ENCODE measurements at regions of chr2 and their contacts with region 1.

Region 1: GRCh38 chr2:231674587-231675338 is 33.6 kb upstream of the PTMA start:
- DNase-seq: no peak
- H3K4me3 ChIP-seq: no peak overlapping the region
- H3K27ac ChIP-seq: no peak overlapping the region
- H3K27me3 ChIP-seq: no peaks in the 10 kb centered on the region
- CTCF ChIP-seq: peak; percentile 88

Region 2: GRCh38 chr2:231212329-231212845 is 462.4 kb before region 1 on chr2:
- CTCF ChIA-PET with region 1: no interaction called
- POLR2A ChIA-PET with region 1: no interaction called
- DNase-seq: no peak
- H3K4me3 ChIP-seq: no peak overlapping the region
- H3K27ac ChIP-seq: peak overlapping the region; percentile 43
- H3K27me3 ChIP-seq: no peaks in the 10 kb centered on the region
- CTCF ChIP-seq: no peak

Region 3: GRCh38 chr2:231612179-231613053 is 62.3 kb before region 1 on chr2:
- CTCF ChIA-PET with region 1: interaction called, 256 read pairs
- POLR2A ChIA-PET with region 1: interaction called, 6 read pairs
- DNase-seq: peak; percentile 84
- H3K4me3 ChIP-seq: no peak overlapping the region
- H3K27ac ChIP-seq: peak overlapping the region; percentile 96
- H3K27me3 ChIP-seq: no peaks in the 10 kb centered on the region
- CTCF ChIP-seq: peak; percentile 93

Region 4: DNA sequence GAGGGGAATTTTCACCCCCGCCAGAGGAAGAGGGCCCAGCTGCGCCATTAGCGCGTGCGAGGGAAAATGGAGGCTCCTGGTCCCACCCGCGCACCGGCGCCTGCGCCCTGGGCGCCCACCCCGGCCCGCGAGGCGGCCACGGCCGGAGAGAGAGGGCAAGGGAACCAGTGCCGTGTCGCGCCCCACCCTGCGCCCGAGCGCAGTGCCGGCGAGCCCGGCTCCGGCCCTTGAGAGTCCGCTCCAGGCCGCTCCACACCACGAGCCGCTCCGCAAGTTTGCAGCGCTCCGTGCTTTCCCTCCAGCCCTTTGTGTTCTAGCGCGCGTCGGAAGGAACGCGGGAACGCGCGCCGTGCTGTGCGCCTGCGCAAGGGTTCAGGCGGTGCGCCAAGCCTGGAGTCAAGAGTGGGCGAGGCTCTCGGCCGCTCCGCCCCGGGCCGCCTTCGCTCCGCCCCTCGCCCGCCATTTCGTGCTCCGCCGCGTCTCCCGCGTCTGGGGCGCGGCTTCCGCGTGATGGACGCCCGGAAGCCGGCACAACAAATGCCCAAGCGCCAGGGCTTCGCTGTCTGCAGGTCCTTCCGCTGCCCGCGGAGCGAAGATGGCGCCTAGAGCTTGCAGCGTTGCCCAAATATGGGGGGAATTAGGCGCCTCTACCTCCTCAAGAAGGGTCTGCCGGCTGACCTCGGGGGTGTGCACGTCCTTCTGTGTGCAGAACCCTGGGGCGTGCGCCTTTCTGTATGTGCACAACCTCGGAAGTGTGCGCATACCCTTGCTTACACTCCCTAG is 12.5 kb before region 1 on chr2:
- CTCF ChIA-PET with region 1: interaction called, 74 read pairs
- POLR2A ChIA-PET with region 1: interaction called, 6 read pairs
- DNase-seq: peak; percentile 95
- H3K4me3 ChIP-seq: peak overlapping the region; percentile 46
- H3K27ac ChIP-seq: peak overlapping the region; percentile 61
- H3K27me3 ChIP-seq: no peaks in the 10 kb centered on the region
- CTCF ChIP-seq: no peak

Region 5: DNA sequence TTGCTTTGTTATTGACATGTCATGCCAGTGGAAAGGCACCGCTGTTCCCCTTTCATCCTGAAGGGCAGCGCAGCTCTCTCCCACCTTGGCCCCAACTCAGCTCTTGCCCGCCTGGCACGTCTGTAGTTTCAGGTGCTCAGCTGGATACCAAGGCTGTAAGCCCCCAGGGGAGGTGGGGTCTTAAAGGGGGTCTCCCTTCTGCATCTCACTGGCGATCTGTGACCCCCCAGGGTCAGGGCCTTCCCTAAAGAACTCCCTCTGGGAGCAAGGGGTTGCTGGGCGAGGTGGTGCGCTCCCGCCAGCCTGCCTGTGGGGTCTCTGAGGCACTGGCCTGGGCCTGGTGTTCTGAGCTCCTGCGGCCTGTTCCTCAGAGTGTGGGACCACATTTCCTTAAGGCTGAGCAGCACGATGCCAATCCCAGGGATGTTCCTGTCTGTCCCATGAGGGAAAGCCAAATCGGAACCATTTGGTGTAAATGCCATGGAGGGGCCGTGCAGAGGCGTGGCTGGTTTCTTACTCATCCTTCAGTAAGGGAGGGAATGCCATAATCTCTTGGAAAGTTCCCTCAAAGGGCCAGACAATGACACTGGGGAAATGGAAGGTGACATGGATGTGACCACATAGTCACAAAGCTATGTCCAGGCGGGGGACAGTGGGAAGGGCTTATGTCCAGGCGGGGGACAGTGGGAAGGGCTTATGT is 19.0 kb after region 1 on chr2:
- CTCF ChIA-PET with region 1: interaction called, 15 read pairs
- POLR2A ChIA-PET with region 1: no interaction called
- DNase-seq: no peak
- H3K4me3 ChIP-seq: no peak overlapping the region
- H3K27ac ChIP-seq: peak overlapping the region; percentile 11
- H3K27me3 ChIP-seq: no peaks in the 10 kb centered on the region
- CTCF ChIP-seq: no peak

Region 6: GRCh38 chr2:231706731-231707624 is 32.2 kb after region 1 on chr2:
- CTCF ChIA-PET with region 1: interaction called, 227 read pairs
- POLR2A ChIA-PET with region 1: interaction called, 51 read pairs
- DNase-seq: peak; percentile 97
- H3K4me3 ChIP-seq: peak overlapping the region; percentile 77
- H3K27ac ChIP-seq: peak overlapping the region; percentile 98
- H3K27me3 ChIP-seq: no peaks in the 10 kb centered on the region
- CTCF ChIP-seq: peak; percentile 91

Region 7: GRCh38 chr2:231726228-231726627 is 51.5 kb after region 1 on chr2:
- CTCF ChIA-PET with region 1: interaction called, 10 read pairs
- POLR2A ChIA-PET with region 1: interaction called, 8 read pairs
- DNase-seq: no peak
- H3K4me3 ChIP-seq: no peak overlapping the region
- H3K27ac ChIP-seq: no peak overlapping the region
- H3K27me3 ChIP-seq: no peaks in the 10 kb centered on the region
- CTCF ChIP-seq: no peak

Region 8: DNA sequence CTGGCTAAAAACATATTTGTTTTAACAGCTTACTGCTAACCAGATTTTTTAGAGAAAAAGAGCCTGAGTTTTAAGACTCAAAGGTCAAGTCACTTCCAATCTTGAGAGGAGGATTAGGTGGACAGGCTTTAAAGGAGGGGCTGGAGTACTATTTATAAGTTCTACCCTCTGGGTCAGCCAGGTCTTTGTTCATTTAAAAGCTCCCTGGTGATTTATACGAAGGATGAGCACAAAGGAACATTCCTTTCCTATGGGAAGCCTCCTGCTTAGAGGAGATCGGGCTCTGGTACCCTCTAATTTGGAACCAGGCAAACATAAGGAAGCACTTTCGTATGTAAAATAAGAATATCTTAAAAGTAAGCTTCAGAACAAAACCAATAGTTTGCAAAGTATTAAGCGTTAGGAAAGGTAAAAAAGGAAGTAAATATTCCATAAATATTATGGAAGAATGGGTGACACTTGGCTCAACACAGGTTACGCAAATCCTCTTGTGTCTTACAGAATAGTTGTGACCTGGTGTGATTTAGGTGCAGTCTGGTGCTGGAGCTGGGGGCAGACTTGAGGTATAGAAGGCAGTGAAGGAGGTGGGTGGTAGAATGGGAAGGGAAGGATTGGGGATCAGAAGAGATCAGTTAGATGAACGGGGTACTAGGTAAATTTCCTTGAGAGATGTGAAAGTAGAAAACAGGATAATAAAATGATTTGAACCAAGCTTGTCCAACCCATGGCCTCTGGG is 70.7 kb after region 1 on chr2:
- CTCF ChIA-PET with region 1: no interaction called
- POLR2A ChIA-PET with region 1: no interaction called
- DNase-seq: no peak
- H3K4me3 ChIP-seq: no peak overlapping the region
- H3K27ac ChIP-seq: no peak overlapping the region
- H3K27me3 ChIP-seq: no peaks in the 10 kb centered on the region
- CTCF ChIP-seq: no peak